ENCODE measurements at regions of chr16 and their contacts with region 1.

Region 1: DNA sequence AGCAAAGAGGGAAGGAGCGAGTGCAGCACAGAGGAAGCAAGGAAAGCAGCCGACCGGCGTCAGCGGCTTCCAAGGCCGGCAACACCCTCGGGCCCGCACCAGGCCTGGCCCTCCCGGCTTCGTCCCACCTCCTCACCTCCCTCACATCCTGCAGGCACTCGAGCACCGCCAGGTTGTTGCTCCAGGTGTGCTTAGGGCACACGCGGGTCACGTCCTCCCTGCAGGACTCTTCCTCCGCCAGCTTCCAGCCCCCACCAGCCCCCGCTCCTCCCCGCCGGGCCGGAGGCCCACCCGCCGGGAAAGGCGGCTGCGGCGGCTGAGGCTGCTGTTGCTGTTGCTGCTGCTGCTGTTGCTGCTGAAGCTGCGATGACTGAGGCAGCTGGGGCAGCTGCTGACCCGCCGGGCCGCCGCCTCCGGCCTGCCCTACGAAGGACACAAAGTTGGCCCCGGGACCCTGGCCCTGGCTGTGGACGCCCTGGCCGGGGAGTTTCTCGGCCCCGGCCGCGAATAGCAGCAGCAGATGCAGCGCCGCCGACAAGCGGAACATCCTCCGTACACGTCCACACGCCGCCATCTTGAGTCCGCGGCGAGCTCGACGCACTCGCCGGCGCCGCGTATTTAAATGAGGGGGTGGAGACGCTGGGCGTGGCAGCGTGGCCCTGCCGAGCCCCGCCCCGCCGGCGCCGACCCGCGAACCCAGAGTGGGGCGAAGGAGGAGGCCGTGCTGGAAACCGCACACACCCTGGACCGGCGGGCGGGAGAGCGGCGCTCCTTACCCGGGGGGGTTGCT is at the start of gene GLG1:
- DNase-seq: peak; percentile 74 to 86
- H3K4me3 ChIP-seq: peak within 1 kb of the TSS; percentile 98
- H3K27ac ChIP-seq: peak within 1 kb of the TSS; percentile 69
- H3K4me1 ChIP-seq: peaks cover 33% of the 10 kb centered on the region
- H3K27me3 ChIP-seq: no peaks in the 10 kb centered on the region
- CTCF ChIP-seq: no peak
- total RNA-seq, gene GLG1: 117 TPM in 2 replicates

Region 2: GRCh38 chr16:74372953-74373846 is 233.5 kb before region 1 on chr16:
- CTCF ChIA-PET with region 1: no interaction called
- POLR2A ChIA-PET with region 1: no interaction called
- intact Hi-C with region 1: loop called (anchors 10 kb)
- DNase-seq: no peak
- H3K4me3 ChIP-seq: no peak overlapping the region
- H3K27ac ChIP-seq: no peak overlapping the region
- H3K4me1 ChIP-seq: no peaks in the 10 kb centered on the region
- H3K27me3 ChIP-seq: peaks cover 19% of the 10 kb centered on the region
- CTCF ChIP-seq: no peak

Region 3: DNA sequence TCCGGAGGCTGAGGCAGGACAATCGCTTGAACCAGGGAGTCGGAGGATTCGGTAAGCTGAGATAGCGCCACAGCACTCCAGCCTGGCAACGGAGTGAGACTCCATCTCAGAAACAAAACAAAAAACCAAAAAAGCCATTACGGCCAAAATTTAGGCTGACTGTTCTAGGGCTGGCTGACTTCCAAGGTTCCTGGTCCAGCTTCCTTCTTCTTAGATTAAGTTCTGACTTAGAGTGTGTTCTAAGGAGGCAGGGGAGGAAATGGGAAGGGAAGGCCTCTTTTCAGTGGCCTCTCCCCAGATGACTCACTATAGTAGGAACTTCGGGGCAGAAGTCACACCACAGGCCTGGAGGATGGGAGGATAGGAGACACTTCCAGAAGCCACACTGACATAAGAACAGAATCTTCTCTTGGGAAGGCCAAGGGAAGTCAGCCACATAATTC is 157.7 kb before region 1 on chr16:
- CTCF ChIA-PET with region 1: no interaction called
- POLR2A ChIA-PET with region 1: no interaction called
- intact Hi-C with region 1: loop called (anchors 5 kb)
- DNase-seq: peak; percentile 63 to 80
- H3K4me3 ChIP-seq: no peak overlapping the region
- H3K27ac ChIP-seq: peak overlapping the region; percentile 53
- H3K4me1 ChIP-seq: peaks cover 37% of the 10 kb centered on the region
- H3K27me3 ChIP-seq: no peaks in the 10 kb centered on the region
- CTCF ChIP-seq: no peak

Region 4: DNA sequence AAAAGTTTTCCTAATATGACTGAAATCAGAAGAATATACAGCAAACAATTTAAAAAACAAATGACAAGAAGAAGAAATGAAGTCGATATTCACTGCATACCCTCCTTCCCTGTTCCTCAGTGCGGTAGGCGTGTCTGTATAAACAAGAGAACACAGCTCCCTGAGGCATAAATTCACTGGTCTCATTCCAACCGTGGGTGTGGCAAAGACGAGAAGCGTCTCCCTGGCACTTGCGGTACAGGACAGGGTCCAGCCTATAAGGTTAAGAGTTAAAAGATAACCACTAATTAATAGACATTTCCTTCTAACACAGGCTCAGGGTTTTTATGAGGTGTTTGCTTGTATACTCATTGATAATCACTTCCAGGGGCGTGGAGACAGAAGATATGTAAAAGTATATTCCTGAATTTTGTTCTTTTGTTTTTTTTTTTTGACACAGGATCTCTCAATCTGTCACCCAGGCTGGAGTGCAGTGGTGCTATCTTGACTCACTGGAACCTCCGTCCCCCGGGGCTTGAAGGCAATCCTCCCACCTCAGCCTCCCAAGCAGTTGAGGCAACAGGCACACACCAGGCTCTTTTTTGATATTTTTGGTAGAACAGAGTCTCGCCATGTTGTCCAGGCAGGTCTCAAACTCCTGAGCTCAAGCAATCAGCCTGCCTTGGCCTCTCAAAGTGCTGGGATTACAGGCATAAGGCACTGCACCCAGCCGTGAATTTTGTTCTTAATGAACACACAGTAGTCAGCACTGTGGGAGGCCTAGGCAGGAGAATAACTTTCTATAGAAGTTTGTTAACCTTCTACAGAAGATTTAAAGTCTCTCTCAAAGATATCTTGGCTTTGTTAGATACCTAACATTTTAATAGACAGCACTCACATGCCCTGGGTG is 126.3 kb before region 1 on chr16:
- CTCF ChIA-PET with region 1: no interaction called
- POLR2A ChIA-PET with region 1: interaction called, 8 read pairs
- intact Hi-C with region 1: loop called (anchors 10 kb)
- DNase-seq: peak; percentile 80 to 94
- H3K4me3 ChIP-seq: no peak overlapping the region
- H3K27ac ChIP-seq: peak overlapping the region; percentile 62
- H3K4me1 ChIP-seq: peaks cover 29% of the 10 kb centered on the region
- H3K27me3 ChIP-seq: no peaks in the 10 kb centered on the region
- CTCF ChIP-seq: no peak

Region 5: GRCh38 chr16:74766729-74767128 is 160.0 kb after region 1 on chr16:
- CTCF ChIA-PET with region 1: no interaction called
- POLR2A ChIA-PET with region 1: interaction called, 10 read pairs
- intact Hi-C with region 1: no loop called
- DNase-seq: no peak
- H3K4me3 ChIP-seq: no peak overlapping the region
- H3K27ac ChIP-seq: no peak overlapping the region
- H3K4me1 ChIP-seq: no peaks in the 10 kb centered on the region
- H3K27me3 ChIP-seq: no peaks in the 10 kb centered on the region
- CTCF ChIP-seq: no peak